Panc1 (cell line): ENCODE measurements at regions of chr20 and their contacts with region 1.

Region 1: DNA sequence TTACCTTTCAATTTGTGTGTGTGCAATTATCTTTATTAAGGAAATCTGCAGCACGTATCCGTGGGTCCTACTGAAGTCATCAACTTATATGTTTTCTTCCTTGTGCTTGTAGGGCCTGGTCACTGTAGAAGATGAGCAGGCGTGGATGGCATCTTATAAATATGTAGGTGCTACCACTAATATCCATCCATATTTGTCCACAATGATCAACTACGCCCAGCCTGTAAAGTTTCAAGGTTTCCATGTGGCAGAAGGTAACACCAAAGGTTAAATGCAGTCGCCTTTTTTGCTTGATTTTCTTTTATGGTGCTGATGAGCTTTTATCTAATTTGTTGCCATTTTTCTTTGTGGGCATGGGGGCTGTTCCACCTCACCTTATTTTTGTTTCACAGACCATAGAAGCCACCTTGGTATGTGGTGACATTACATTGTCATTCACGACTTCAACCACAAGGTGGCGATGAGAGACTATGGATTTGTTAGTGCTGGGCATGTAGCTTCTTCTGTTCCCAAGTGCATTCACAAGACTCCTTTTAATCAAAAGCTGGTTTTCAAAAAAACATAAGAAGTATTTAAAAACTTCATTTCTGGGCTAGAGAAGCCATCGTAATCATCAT is 106.5 kb upstream of the LAMP5 start:
- DNase-seq: peak; percentile 71
- ATAC-seq: peak; percentile 95
- H3K4me3 ChIP-seq: no peak overlapping the region
- H3K27ac ChIP-seq: no peak overlapping the region
- H3K4me1 ChIP-seq: no peaks in the 10 kb centered on the region
- H3K27me3 ChIP-seq: no peaks in the 10 kb centered on the region
- CTCF ChIP-seq: peak; percentile 85

Region 2: GRCh38 chr20:9301129-9302090 is 106.5 kb before region 1 on chr20:
- CTCF ChIA-PET with region 1: no interaction called
- POLR2A ChIA-PET with region 1: no interaction called
- in situ Hi-C with region 1: no loop called
- intact Hi-C with region 1: no loop called
- DNase-seq: no peak
- ATAC-seq: no peak
- H3K4me3 ChIP-seq: no peak overlapping the region
- H3K27ac ChIP-seq: no peak overlapping the region
- H3K4me1 ChIP-seq: no peaks in the 10 kb centered on the region
- H3K27me3 ChIP-seq: no peaks in the 10 kb centered on the region
- CTCF ChIP-seq: no peak

Region 3: DNA sequence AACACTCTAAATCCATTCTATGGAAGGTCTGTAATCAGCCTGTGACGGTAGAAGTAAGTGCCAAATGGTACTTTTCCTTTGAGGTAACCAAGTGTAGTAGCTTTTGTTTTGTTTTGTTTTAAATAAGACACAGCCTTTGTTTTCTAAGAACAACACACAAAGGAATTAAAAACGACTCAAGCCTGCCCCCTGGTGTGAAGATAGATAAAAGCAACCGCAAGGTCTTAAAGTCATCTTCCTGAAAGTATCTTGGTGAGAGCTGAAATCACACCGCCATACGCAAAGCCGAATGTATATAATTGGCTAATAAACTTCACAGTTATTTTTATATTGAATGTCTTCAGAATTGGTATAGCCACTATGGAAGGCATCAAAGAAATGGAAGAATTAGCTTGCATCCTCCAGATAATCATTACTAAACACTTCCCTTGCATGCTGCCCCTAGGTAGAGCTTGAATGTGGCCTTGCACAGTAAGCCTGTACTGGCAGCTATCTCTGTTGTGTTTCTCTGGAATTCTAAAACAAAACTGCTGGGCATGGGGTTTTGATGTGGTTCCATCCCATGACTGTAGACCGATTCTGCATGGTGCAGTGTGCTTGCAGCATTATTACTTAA is 202.1 kb after region 1 on chr20:
- CTCF ChIA-PET with region 1: interaction called, 27 read pairs
- POLR2A ChIA-PET with region 1: no interaction called
- in situ Hi-C with region 1: no loop called
- intact Hi-C with region 1: loop called (anchors 1 kb)
- DNase-seq: peak; percentile 39
- ATAC-seq: no peak
- H3K4me3 ChIP-seq: no peak overlapping the region
- H3K27ac ChIP-seq: no peak overlapping the region
- H3K4me1 ChIP-seq: no peaks in the 10 kb centered on the region
- H3K27me3 ChIP-seq: no peaks in the 10 kb centered on the region
- CTCF ChIP-seq: peak; percentile 67; the same call in 1 of the 2 replicates

Region 4: DNA sequence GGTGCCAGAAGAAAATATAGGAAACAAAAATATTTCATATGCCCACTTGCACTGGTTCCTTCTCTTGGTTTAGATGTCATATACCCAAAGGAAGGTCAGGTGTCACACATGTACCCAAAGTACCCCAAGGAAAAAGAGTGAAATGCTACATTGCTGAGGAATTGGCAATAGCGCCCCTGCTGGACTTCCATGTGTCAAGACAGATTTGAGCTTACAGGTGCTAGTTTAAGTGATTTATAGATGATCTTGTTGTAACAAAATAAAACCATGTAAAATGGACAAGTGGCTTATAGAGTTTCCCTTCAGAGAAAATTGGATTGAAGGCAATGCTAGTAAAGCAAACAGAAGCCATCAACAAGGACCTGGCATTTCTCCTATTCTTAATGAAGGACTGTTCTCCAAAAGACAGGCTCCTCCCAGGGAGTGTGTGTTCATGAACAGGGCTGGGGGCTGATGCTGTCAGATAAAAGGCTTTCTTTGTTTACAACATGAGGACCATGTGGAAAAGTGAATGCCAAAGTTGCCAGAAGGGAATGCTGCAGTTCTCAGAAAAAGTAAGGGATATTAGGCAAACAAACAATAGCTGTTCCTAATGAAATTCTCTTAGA is 495.2 kb after region 1 on chr20:
- CTCF ChIA-PET with region 1: no interaction called
- POLR2A ChIA-PET with region 1: no interaction called
- in situ Hi-C with region 1: no loop called
- intact Hi-C with region 1: loop called (anchors 10 kb)
- DNase-seq: no peak
- ATAC-seq: no peak
- H3K4me3 ChIP-seq: no peak overlapping the region
- H3K27ac ChIP-seq: no peak overlapping the region
- H3K4me1 ChIP-seq: no peaks in the 10 kb centered on the region
- H3K27me3 ChIP-seq: no peaks in the 10 kb centered on the region
- CTCF ChIP-seq: peak; percentile 59